Activated naive CD4-positive, alpha-beta T cell treated with anti-CD3 and anti-CD28 coated beads for 36 hours (primary cell): ENCODE measurements at regions of chr4 and their contacts with region 1.

Region 1: GRCh38 chr4:153987291-153987690 is 198.4 kb upstream of the SFRP2 start:
- DNase-seq: no peak
- H3K4me3 Mint-ChIP-seq: no peak overlapping the region
- H3K27ac Mint-ChIP-seq: no peak overlapping the region
- H3K4me1 Mint-ChIP-seq: no peaks in the 10 kb centered on the region
- H3K27me3 Mint-ChIP-seq: peaks cover 21% of the 10 kb centered on the region

Region 2: DNA sequence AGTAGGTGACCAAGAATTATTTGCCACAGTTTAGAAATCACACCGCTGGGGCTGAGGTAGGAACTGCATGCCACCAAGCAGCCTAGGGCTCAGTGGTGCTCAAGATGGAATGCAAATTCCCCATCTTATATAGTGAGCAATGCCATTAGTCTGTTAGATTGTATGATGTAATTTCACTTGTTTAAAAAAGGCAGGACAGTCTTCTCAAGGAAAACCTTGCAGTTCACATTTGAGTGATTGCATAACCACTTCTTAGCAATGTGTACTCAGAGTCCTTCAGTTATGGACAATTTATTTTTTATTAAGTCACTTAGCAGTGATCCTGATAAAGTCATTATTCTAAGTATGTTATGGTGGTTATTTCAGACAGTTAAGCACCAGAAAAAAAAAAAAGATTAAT is 55.5 kb before region 1 on chr4:
- CTCF ChIA-PET with region 1: interaction called, 3 read pairs
- intact Hi-C with region 1: loop called (anchors 2 kb)
- DNase-seq: no peak
- H3K4me3 Mint-ChIP-seq: no peak overlapping the region
- H3K27ac Mint-ChIP-seq: no peak overlapping the region
- H3K4me1 Mint-ChIP-seq: no peaks in the 10 kb centered on the region
- H3K27me3 Mint-ChIP-seq: peaks cover 18% of the 10 kb centered on the region

Region 3: GRCh38 chr4:154320521-154320920 is 333.2 kb after region 1 on chr4:
- CTCF ChIA-PET with region 1: no interaction called
- intact Hi-C with region 1: no loop called
- DNase-seq: no peak
- H3K4me3 Mint-ChIP-seq: no peak overlapping the region
- H3K27ac Mint-ChIP-seq: no peak overlapping the region
- H3K4me1 Mint-ChIP-seq: no peaks in the 10 kb centered on the region
- H3K27me3 Mint-ChIP-seq: peaks cover 36% of the 10 kb centered on the region

Region 4: GRCh38 chr4:154343651-154344050 is 356.4 kb after region 1 on chr4:
- CTCF ChIA-PET with region 1: no interaction called
- intact Hi-C with region 1: no loop called
- DNase-seq: no peak
- H3K4me3 Mint-ChIP-seq: no peak overlapping the region
- H3K27ac Mint-ChIP-seq: no peak overlapping the region
- H3K4me1 Mint-ChIP-seq: no peaks in the 10 kb centered on the region
- H3K27me3 Mint-ChIP-seq: peaks cover 8% of the 10 kb centered on the region